Panc1 (cell line): ENCODE measurements at regions of chr6 and their contacts with region 1.

Region 1: DNA sequence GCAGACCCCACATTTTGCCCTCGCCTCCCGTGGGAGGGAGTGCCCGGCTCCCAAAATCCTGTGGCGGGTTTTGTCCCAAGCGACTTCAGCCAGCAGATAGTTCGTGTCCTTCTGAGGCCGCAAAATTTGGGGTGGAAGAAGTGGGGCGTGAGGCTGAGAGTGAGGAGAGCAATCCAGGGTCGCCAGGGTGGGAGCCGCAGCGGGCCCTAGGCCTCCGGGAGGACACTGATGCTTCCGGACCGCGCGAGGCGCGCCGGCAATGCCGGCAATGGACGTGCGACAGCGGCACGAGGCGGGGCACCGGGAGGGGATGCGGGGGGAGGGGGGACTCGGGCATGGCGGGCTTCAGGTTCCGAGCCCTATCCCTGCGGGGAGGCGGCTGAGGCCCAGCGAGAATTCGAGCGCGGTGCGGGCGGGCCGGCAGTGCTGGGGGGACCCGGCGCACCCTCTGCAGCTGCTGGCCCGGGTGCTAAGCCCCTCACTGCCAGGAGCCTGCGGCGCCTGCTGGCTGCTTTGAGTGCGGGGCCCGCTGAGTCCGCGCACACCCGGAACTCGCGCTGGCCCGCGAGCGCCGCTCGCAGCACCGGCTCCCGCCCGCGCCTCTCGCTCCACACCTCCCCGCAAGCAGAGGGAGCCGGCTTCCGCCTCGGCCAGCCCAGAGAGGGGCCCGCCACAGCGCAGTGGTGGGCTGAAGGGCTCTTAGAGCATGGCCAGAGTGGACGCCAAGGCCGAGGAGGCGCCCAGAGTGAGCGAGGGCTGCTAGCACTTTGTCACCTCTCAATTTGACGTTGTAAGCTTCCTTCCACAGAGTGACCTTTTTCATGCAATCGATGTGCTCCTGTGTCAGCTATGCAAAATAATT is 143.8 kb downstream of the LPA start:
- DNase-seq: peak; percentile 53
- ATAC-seq: peak; percentile 89
- H3K4me3 ChIP-seq: peak overlapping the region; percentile 40 to 69
- H3K27ac ChIP-seq: no peak overlapping the region
- H3K4me1 ChIP-seq: no peaks in the 10 kb centered on the region
- H3K27me3 ChIP-seq: peaks cover 6% of the 10 kb centered on the region; the same call in 1 of the 2 replicates
- CTCF ChIP-seq: peak; percentile 42

Region 2: DNA sequence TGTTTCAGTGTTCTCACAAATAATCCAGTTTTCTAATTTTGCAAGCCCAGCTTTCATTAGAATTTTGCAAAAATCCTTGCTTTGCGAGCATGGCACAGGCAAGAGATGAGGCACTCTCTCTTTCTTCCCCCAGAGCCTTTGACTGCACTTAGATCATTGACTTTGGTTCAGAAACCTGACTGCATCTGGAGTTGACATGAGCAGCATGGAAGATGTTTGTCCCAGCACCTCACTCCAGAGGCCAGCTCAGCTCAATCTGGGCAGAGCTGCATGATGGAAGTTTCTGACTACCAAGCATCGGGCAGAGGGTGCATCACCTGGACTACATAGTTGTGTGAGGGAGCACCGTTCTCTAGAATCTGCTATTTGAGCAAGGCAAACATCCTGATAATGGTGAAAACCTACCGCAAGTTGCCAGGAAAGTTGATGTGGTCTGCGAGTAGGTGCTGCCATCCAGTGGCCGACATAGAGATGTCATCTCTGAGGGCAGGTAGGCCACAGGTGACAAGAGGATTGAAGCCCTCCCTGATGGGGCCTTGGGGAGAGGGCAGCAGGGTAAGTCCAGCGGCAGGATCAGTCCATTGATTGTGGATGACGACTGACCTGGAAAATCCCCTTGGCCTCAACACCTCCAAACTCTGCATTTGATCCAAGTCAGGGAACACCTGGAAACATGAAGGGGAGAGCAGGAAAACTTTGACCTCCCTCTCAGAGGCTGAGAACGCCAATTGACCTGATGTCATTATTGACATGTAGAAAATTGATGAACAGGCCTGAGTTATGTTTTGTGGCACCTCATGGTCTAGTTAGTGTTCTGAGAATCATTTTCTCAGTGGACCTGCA is 147.6 kb after region 1 on chr6:
- CTCF ChIA-PET with region 1: interaction called, 5 read pairs
- POLR2A ChIA-PET with region 1: no interaction called
- in situ Hi-C with region 1: no loop called
- intact Hi-C with region 1: loop called (anchors 1 kb)
- DNase-seq: peak; percentile 25
- ATAC-seq: peak; percentile 83
- H3K4me3 ChIP-seq: no peak overlapping the region
- H3K27ac ChIP-seq: no peak overlapping the region
- H3K4me1 ChIP-seq: no peaks in the 10 kb centered on the region
- H3K27me3 ChIP-seq: no peaks in the 10 kb centered on the region
- CTCF ChIP-seq: peak; percentile 82

Region 3: DNA sequence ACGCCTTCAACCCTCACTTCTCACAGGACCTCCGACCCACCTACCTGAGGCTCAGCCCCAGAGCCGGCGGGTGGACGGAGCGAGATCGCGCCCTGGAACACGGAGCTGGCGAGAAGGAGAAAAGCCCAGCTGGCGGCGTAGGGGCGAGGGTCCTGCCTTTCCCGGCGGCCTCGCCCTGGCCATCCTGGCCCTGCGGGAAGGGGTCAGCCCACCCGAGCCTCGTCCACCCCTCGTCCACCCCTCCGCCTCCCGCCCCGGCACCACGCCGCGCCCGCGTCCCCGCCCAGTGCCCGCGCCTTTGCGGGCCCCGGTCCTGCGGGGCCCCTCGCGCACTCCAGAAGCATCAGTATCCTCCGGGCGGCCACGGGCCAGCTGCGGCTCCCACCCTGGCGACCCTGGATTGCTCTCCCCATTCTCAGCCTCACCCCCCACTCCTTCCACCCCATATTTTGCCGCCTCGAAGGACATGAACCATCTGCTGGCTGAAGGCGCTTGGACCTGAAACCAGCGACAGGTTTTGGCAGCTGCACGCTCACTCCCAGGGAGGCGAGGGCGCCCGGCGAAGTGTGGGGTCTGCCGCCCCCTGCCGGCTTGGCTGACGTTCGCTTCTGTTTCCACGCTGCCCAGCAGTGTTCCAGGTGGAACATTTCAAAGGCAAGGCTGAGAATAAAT is 246.9 kb after region 1 on chr6:
- CTCF ChIA-PET with region 1: no interaction called
- POLR2A ChIA-PET with region 1: no interaction called
- in situ Hi-C with region 1: no loop called
- intact Hi-C with region 1: loop called (anchors 10 kb)
- DNase-seq: no peak
- ATAC-seq: peak; percentile 97
- H3K4me3 ChIP-seq: peak overlapping the region; percentile 51 to 74
- H3K27ac ChIP-seq: peak overlapping the region; percentile 42; the same call in 1 of the 2 replicates
- H3K4me1 ChIP-seq: no peaks in the 10 kb centered on the region
- H3K27me3 ChIP-seq: no peaks in the 10 kb centered on the region
- CTCF ChIP-seq: peak; percentile 96